Gastrocnemius medialis (tissue), 4 donors: ENCODE measurements at regions of chr11 and their contacts with region 1.

Region 1: GRCh38 chr11:1298695-1299492 is 10.5 kb downstream of the TOLLIP start:
- DNase-seq: peak; percentile 92 to 96
- ATAC-seq: peak; percentile 81 to 85
- H3K4me3 ChIP-seq: peak overlapping the region; percentile 28 to 35 (median 32)
- H3K27ac ChIP-seq: peak overlapping the region; percentile 89 to 94 (median 92)
- H3K4me1 ChIP-seq: peaks cover 36 to 39% of the 10 kb centered on the region in 2 donors
- H3K27me3 ChIP-seq: no peaks in the 10 kb centered on the region
- CTCF ChIP-seq: no peak
- POLR2A ChIP-seq: peak; percentile 76 to 78

Region 2: DNA sequence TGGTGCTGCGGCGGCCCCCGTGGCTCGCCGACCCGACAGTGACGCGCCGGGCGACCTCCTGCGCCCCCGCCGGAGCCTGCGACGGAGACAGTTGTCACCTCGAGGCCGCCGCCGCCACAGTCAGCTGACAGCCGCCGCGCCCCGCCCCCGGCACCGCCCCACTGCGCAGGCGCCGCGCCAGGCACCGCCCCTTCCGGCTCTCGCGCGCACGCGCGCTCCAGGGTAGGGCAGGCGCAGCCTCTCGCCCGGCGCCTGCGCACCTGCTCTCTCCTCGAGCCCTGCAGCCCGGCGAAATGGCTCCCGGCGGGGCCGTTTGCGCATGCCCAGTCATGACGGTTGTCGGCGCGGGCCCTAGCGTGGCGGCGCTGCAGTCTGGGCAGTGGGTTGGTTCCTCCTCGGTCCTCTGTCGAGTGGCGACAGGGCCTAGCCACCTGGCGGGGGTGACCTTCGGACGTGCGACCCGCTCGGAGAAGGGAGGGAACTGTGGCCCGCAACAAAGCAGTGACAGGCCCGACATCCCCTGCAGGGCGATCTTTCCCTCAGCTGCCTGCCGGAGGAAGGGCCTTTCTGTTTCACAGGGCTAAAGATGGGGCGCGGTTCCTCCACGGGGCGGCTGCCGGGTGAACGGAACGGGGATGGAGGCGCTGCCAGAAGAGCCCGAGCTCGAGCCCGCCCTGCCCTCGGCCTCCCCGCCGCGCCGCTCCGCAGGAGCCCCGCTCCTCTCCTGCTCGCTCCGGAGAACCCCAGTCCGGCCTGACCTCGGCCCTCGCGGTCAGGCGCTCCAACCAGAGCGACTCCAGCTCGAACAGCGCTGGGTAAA is 10.8 kb after region 1 on chr11 and contains the start of gene TOLLIP:
- in situ Hi-C with region 1: no loop called
- intact Hi-C with region 1: loop called (anchors 1 kb)
- DNase-seq: peak; percentile 92 to 95
- ATAC-seq: peak; percentile 88
- H3K4me3 ChIP-seq: peak within 1 kb of the TSS; percentile 71 to 92 (median 76)
- H3K27ac ChIP-seq: peak within 1 kb of the TSS; percentile 90 to 95 (median 95)
- H3K4me1 ChIP-seq: peaks cover 25 to 39% of the 10 kb centered on the region in 2 donors
- H3K27me3 ChIP-seq: no peaks in the 10 kb centered on the region
- CTCF ChIP-seq: peak; percentile 8 to 45 (median 31)
- POLR2A ChIP-seq: peak; percentile 99
- total RNA-seq, gene TOLLIP: 49.8 to 91.7 (median 85.0) TPM

Region 3: DNA sequence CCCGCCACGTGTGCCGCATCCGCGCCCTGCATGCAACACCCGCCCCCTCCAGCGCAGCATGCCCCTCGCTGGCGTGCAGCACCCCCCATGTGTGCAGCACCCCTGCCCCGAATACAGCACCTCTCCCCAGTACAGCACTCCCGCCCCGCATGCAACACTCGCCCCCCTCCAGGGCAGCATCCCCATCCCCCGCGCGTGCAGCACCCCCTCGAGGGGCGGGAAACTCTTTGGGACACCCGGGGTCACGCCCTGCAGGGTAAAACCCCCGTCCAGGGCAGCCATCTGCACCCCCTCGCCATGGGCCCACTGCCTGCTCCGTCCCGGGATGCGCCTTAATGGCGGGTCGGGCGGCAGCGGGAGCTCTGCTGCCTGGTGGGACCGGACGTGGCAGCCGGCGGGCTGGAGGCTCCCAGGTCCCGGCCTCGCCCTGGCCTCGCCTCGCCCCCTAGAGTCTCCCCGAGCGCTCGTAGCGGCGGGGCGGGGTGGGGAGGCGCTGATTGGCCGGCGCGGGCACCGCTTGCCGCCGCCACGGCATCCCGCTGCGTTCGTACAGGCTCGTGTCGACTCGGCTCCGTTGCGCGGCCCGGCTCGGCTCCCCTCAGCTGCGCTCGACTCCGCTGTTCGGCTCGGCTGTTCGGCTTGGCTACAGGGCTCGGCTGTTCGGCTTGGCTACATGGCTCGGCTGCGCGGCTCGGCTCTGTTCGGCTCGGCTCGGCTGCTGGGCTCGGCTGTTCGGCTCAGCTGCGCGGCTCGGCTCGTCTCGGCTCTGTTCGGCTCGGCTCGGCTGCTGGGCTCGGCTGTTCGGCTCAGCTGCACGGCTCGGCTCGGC is 90.4 kb after region 1 on chr11:
- in situ Hi-C with region 1: no loop called
- intact Hi-C with region 1: loop called (anchors 2 kb)
- DNase-seq: peak; percentile 94
- ATAC-seq: peak; percentile 96 to 98
- H3K4me3 ChIP-seq: peak overlapping the region; percentile 44 to 67 (median 50)
- H3K27ac ChIP-seq: peak overlapping the region in 1 of 4 donors; percentile 16
- H3K4me1 ChIP-seq: peaks cover 4 to 8% of the 10 kb centered on the region in 2 donors
- H3K27me3 ChIP-seq: peaks cover 45 to 50% (median 48%) of the 10 kb centered on the region in 3 donors
- CTCF ChIP-seq: peak in 1 of 5 experiments; percentile 32
- POLR2A ChIP-seq: no peak

Region 4: GRCh38 chr11:1532014-1532586 is 233.2 kb after region 1 on chr11:
- in situ Hi-C with region 1: no loop called
- intact Hi-C with region 1: loop called (anchors 2 kb)
- DNase-seq: peak; percentile 74 to 93
- ATAC-seq: peak; percentile 90
- H3K4me3 ChIP-seq: peak overlapping the region in 2 of 4 donors; percentile 18 to 35
- H3K27ac ChIP-seq: peak overlapping the region; percentile 84 to 96 (median 90)
- H3K4me1 ChIP-seq: peaks cover 82 to 99% of the 10 kb centered on the region in 2 donors
- H3K27me3 ChIP-seq: no peaks in the 10 kb centered on the region
- CTCF ChIP-seq: no peak
- POLR2A ChIP-seq: peak; percentile 76 to 86